AG04449 (cell line): ENCODE measurements at regions of chr9 and their contacts with region 1.

Region 1: GRCh38 chr9:85610074-85610860 is 131.5 kb downstream of the AGTPBP1 start:
- DNase-seq: peak; percentile 44
- H3K4me3 ChIP-seq: peak overlapping the region; percentile 43
- CTCF ChIP-seq: peak; percentile 71

Region 2: GRCh38 chr9:84397151-84397728 is 1213.0 kb before region 1 on chr9:
- CTCF ChIA-PET with region 1: interaction called, 42 read pairs
- POLR2A ChIA-PET with region 1: no interaction called
- DNase-seq: no peak
- H3K4me3 ChIP-seq: no peak overlapping the region
- CTCF ChIP-seq: peak; percentile 81

Region 3: GRCh38 chr9:84697509-84698114 is 912.7 kb before region 1 on chr9:
- CTCF ChIA-PET with region 1: interaction called, 21 read pairs
- POLR2A ChIA-PET with region 1: no interaction called
- DNase-seq: no peak
- H3K4me3 ChIP-seq: no peak overlapping the region
- CTCF ChIP-seq: peak; percentile 92

Region 4: GRCh38 chr9:85425153-85425611 is 185.1 kb before region 1 on chr9:
- CTCF ChIA-PET with region 1: interaction called, 10 read pairs
- POLR2A ChIA-PET with region 1: no interaction called
- DNase-seq: no peak
- H3K4me3 ChIP-seq: no peak overlapping the region
- CTCF ChIP-seq: peak; percentile 76

Region 5: GRCh38 chr9:85453850-85454249 is 156.4 kb before region 1 on chr9:
- CTCF ChIA-PET with region 1: no interaction called
- POLR2A ChIA-PET with region 1: no interaction called
- DNase-seq: no peak
- H3K4me3 ChIP-seq: no peak overlapping the region
- CTCF ChIP-seq: no peak

Region 6: DNA sequence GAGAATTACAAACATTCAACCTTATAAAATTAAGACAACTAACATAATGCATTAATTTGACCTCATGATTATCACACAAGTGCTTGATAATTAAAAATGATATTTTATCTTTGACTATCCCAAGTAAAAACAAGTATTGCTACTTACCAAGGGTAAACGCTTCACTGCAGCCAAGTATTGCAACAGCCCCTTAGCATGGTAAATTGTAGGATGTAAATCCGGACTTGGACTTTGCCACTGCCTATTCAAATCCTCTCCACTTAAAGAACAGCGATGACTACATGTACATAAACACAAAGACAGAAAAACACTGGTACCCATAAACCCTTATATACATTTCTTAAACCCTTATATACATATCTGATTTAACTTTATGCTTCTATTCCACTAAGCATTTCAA is 23.6 kb before region 1 on chr9:
- CTCF ChIA-PET with region 1: interaction called, 15 read pairs
- POLR2A ChIA-PET with region 1: no interaction called
- DNase-seq: no peak
- H3K4me3 ChIP-seq: no peak overlapping the region
- CTCF ChIP-seq: no peak

Region 7: DNA sequence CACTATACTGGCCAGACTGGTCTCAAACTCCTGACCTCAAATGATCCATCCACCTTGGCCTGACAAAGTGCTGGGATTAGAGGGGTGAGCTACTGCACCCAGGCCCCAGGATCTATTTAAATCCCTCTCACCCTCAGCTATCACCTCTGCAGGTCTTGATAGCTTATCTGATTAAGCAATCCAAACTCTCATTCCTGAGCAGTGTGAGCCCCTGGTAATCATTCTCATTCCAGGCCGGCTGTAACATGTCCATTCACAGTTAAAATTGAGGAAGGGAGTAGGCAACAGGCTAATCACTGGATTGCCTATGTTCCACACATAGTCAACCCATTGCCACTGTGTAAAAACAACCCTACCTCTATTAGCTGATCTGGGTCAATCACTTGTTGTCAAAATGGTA is 20.4 kb after region 1 on chr9:
- CTCF ChIA-PET with region 1: interaction called, 11 read pairs
- POLR2A ChIA-PET with region 1: no interaction called
- DNase-seq: no peak
- H3K4me3 ChIP-seq: no peak overlapping the region
- CTCF ChIP-seq: no peak